ENCODE measurements at regions of chr5 and their contacts with region 1.

Region 1: GRCh38 chr5:103139264-103139865 is 19.3 kb downstream of the PPIP5K2 start:
- DNase-seq: peak; percentile 50
- H3K4me3 ChIP-seq: no peak overlapping the region
- H3K27ac ChIP-seq: no peak overlapping the region
- H3K4me1 ChIP-seq: no peaks in the 10 kb centered on the region
- H3K27me3 ChIP-seq: no peaks in the 10 kb centered on the region
- CTCF ChIP-seq: peak; percentile 89 to 93

Region 2: GRCh38 chr5:102536323-102536928 is 602.9 kb before region 1 on chr5:
- CTCF ChIA-PET with region 1: no interaction called
- dilution Hi-C with region 1: no loop called
- in situ Hi-C with region 1: no loop called
- intact Hi-C with region 1: loop called (anchors 1 kb)
- DNase-seq: no peak
- H3K4me3 ChIP-seq: no peak overlapping the region
- H3K27ac ChIP-seq: no peak overlapping the region
- H3K4me1 ChIP-seq: no peaks in the 10 kb centered on the region
- H3K27me3 ChIP-seq: peaks cover 3% of the 10 kb centered on the region
- CTCF ChIP-seq: peak; percentile 29 to 43

Region 3: GRCh38 chr5:102561894-102562760 is 577.2 kb before region 1 on chr5:
- CTCF ChIA-PET with region 1: no interaction called
- dilution Hi-C with region 1: no loop called
- in situ Hi-C with region 1: no loop called
- intact Hi-C with region 1: no loop called
- DNase-seq: peak; percentile 8
- H3K4me3 ChIP-seq: no peak overlapping the region
- H3K27ac ChIP-seq: no peak overlapping the region
- H3K4me1 ChIP-seq: no peaks in the 10 kb centered on the region
- H3K27me3 ChIP-seq: no peaks in the 10 kb centered on the region
- CTCF ChIP-seq: peak; percentile 90

Region 4: GRCh38 chr5:102778478-102778877 is 360.9 kb before region 1 on chr5:
- CTCF ChIA-PET with region 1: no interaction called
- dilution Hi-C with region 1: no loop called
- in situ Hi-C with region 1: no loop called
- intact Hi-C with region 1: loop called (anchors 5 kb)
- DNase-seq: peak; percentile 78
- H3K4me3 ChIP-seq: no peak overlapping the region
- H3K27ac ChIP-seq: peak overlapping the region; percentile 37
- H3K4me1 ChIP-seq: peaks cover 12% of the 10 kb centered on the region
- H3K27me3 ChIP-seq: no peaks in the 10 kb centered on the region
- CTCF ChIP-seq: no peak

Region 5: DNA sequence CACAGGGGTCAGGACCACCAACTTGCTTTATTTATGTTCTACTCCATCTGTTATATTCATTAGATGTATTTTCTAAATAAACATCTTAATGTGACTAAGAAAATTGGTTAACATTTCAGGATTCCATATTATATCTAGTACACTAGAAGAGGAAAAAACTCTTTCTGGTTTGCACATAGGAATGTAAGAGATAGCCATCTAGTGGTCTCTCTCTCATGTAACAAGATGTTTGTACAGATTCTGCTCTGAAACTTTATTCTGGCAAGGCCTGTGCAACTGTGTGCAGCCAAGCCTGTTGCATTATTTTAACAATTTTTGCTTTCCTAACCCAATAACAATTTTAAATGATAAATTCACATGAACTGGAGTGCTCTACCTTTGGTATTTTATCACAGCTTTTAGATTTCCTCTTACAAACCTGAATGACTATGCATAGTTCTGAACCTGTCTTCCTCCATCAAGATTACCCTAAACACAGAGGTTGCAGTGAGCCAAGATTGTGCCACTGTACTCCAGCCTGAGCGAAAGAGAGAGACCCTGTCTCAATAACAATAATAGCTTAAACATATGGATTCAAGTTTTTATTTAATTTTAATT is 167.6 kb before region 1 on chr5:
- CTCF ChIA-PET with region 1: no interaction called
- dilution Hi-C with region 1: no loop called
- in situ Hi-C with region 1: no loop called
- intact Hi-C with region 1: loop called (anchors 5 kb)
- DNase-seq: peak; percentile 9
- H3K4me3 ChIP-seq: no peak overlapping the region
- H3K27ac ChIP-seq: no peak overlapping the region
- H3K4me1 ChIP-seq: no peaks in the 10 kb centered on the region
- H3K27me3 ChIP-seq: no peaks in the 10 kb centered on the region
- CTCF ChIP-seq: peak; percentile 31 to 53

Region 6: DNA sequence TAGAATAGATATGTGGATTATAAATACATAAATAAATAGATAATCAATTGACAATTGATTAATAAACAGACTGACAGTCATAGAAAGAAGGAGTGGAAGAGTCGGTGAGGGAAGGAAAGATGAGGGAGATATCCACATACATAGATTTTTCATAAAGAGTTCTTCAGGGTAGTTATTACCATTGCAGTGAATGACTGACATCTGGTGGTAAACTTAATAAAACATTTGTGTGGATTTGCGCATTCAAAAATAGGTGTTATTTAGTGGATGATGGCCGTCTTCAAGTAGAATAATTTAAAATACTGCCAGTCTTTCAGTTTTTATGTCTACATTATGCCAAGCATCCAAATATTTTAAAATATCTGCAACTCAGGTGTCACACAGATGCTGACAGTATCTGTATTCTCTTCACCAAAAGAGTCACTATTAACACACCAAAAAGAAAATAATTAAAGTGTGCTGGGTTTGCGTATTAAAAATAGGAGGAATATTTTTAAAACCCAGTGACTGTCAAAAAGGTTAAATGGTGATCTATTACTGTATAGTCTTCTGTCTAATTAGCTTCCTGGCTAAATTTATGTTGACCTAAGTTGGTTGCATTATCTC is 98.2 kb before region 1 on chr5:
- CTCF ChIA-PET with region 1: interaction called, 3 read pairs
- dilution Hi-C with region 1: no loop called
- in situ Hi-C with region 1: no loop called
- intact Hi-C with region 1: loop called (anchors 2 kb)
- DNase-seq: peak; percentile 37
- H3K4me3 ChIP-seq: no peak overlapping the region
- H3K27ac ChIP-seq: no peak overlapping the region
- H3K4me1 ChIP-seq: no peaks in the 10 kb centered on the region
- H3K27me3 ChIP-seq: peaks cover 2% of the 10 kb centered on the region
- CTCF ChIP-seq: peak; percentile 28 to 56

Region 7: GRCh38 chr5:103060424-103060954 is 78.9 kb before region 1 on chr5:
- CTCF ChIA-PET with region 1: no interaction called
- dilution Hi-C with region 1: no loop called
- in situ Hi-C with region 1: no loop called
- intact Hi-C with region 1: loop called (anchors 5 kb)
- DNase-seq: no peak
- H3K4me3 ChIP-seq: no peak overlapping the region
- H3K27ac ChIP-seq: no peak overlapping the region
- H3K4me1 ChIP-seq: no peaks in the 10 kb centered on the region
- H3K27me3 ChIP-seq: no peaks in the 10 kb centered on the region
- CTCF ChIP-seq: no peak

Measured in mammary epithelial cell (primary cell).